BJ (cell line): ENCODE measurements at regions of chr16 and their contacts with region 1.

Region 1: GRCh38 chr16:81035398-81035974 is at the start of gene ATMIN:
- DNase-seq: peak; percentile 9
- H3K4me3 ChIP-seq: peak within 1 kb of the TSS; percentile 71
- H3K27me3 ChIP-seq: no peaks in the 10 kb centered on the region
- CTCF ChIP-seq: peak; percentile 80
- polyA plus RNA-seq, gene ATMIN: 22.3 and 34.7 TPM in 2 replicates

Region 2: GRCh38 chr16:81006814-81007696 is 28.4 kb before region 1 on chr16 and contains the starts of genes CENPN and CMC2:
- CTCF ChIA-PET with region 1: interaction called, 23 read pairs
- POLR2A ChIA-PET with region 1: no interaction called
- DNase-seq: peak; percentile 95
- H3K4me3 ChIP-seq: peak within 1 kb of the TSS; percentile 95
- H3K27me3 ChIP-seq: no peaks in the 10 kb centered on the region
- CTCF ChIP-seq: peak; percentile 19; the same call in 1 of the 2 replicates
- polyA plus RNA-seq, gene CENPN: 24.8 and 38.2 TPM in 2 replicates
- polyA plus RNA-seq, gene CMC2: 56.4 and 101 TPM in 2 replicates

Region 3: DNA sequence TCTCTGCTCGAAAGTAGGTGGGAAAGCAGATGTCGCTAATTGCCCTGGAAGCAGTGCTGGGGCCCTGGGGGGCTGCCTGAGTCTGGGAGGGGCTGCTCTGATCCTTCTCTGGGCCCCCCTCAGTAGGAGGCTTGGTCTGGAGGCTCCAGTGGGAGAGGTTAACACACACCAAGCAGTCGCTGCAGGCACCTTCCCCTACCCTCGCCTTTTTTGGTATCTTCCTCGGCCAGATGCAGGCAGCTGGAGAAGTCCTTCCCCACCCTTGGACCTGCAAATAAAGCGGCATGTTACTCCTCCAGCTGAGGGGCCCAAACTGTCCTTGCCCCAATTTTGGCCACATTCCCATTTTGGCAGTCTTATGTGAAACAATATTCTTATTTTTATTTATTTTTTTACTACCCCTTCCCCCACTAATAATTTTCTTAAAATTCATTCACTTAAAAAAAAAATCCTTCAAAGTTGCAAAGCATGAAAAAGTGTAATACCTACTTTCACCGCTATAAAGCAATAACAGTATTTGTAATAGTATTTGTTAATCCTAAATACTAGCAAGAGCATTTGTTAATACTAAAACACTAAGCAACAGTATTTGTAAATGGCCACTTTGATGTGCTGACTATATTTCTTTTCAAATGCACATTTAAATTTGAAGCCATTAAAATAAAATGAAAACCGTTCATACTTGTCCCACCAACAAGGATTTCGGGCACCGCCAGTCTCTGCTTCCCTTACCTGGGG is 26.6 kb after region 1 on chr16:
- CTCF ChIA-PET with region 1: interaction called, 11 read pairs
- POLR2A ChIA-PET with region 1: interaction called, 3 read pairs
- DNase-seq: no peak
- H3K4me3 ChIP-seq: no peak overlapping the region
- H3K27me3 ChIP-seq: no peaks in the 10 kb centered on the region
- CTCF ChIP-seq: no peak

Region 4: DNA sequence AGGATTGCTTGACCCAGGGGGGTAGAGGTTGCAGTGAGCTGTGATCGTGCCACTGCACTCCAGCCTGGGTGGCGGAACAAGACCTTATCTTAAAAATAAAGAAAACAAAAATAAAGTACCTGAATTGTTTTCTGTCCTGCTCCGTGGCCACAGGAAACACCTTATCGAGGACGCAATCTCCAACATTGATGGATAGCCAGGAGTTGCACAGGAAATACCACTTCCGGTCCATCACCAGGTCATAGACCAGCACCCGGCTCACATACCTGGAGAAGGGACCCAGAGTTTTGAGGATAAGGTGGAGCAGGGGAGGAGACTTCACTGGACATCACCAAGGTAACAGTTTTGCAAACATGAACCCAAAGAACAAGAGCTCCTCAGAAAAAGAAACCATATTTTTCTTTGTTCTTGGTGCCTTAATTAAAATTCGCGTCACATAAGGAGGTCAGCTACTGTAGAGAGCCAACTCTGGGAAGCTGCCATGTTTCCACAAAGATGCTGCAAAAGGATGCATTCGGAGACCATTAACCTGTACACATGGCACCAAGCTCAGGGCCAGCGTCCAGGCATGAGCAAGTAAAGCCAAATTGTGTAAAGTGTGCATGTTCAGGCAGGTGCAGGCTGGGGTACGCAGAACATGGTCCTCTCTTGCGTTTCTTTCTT is 116.3 kb after region 1 on chr16:
- CTCF ChIA-PET with region 1: no interaction called
- POLR2A ChIA-PET with region 1: no interaction called
- DNase-seq: no peak
- H3K4me3 ChIP-seq: no peak overlapping the region
- H3K27me3 ChIP-seq: peaks cover 5% of the 10 kb centered on the region; the same call in 1 of the 2 replicates
- CTCF ChIP-seq: no peak

Region 5: GRCh38 chr16:81198635-81199034 is 163.1 kb after region 1 on chr16:
- CTCF ChIA-PET with region 1: interaction called, 22 read pairs
- POLR2A ChIA-PET with region 1: no interaction called
- DNase-seq: no peak
- H3K4me3 ChIP-seq: no peak overlapping the region
- H3K27me3 ChIP-seq: peaks cover 1% of the 10 kb centered on the region; the same call in 1 of the 2 replicates
- CTCF ChIP-seq: peak; percentile 34; the same call in 1 of the 2 replicates